ENCODE measurements at regions of chr10 and their contacts with region 1.

Region 1: DNA sequence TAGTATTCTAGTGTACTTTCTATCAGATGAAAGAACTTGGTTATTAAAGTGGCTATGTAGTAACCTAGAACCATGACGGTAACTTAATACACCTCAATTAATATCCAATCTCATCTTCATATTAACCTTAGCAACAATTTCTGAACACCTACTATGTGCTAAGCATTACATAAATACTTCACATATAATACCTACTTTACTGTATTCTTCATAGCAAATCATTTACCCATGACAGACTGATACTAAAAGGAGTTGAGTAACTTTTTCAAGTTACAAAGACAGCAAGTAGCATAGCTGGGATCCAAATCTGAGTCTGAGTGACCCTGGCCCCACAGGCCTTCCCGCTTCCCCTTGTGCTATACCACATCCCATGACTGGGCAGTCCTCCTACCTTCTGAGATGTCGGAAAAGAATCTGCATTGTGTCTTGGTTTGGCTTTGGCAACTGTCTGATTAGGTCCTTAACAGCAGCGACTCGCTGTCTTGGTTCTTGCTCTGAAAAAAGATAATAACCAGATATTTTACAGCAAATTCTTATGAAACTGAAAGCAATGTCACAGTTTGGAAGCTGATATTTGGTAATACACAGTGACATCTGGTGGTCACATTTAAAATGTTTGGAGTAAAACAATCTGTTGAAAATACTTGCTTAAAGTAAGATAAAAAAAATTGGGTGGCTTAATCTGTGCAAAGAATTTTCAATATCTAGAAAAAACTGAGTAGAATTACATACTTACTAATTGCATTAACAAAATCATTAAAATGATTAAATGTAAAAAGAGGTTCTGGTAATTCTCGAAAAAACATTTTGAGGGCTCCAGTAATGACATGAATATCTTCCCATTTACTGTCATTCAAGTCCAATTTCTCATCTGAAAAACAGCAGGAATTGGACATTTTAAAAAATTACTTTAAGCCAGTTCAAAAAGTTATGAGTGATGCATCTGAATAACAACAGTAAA is 120.1 kb downstream of the ARHGAP12 start:
- H3K4me3 Mint-ChIP-seq: peak overlapping the region; percentile 64
- H3K27ac Mint-ChIP-seq: peak overlapping the region; percentile 61
- H3K4me1 Mint-ChIP-seq: peaks cover 6% of the 10 kb centered on the region
- H3K27me3 Mint-ChIP-seq: no peaks in the 10 kb centered on the region

Region 2: DNA sequence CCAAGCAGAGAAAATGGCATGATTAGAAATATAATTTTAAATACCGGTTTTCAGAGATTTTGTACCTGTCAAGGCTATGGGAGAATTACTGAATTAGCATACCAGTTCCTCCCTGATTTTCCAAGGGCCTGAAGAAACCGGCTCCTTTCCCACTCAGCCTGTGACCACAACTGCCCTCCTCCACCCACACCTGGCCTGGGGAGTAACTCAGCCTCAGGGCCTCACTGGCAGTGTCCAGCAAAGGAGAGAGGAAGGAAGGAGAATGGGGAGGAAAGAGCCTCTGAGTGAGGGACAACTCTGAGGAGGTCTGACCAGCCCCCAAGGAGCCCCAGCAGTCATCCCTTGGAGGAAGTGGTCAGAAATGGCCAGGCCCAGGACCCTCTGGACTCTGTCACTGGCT is 1081.0 kb before region 1 on chr10:
- intact Hi-C with region 1: loop called (anchors 2 kb)
- H3K4me3 Mint-ChIP-seq: no peak overlapping the region
- H3K27ac Mint-ChIP-seq: no peak overlapping the region
- H3K4me1 Mint-ChIP-seq: peaks cover 6% of the 10 kb centered on the region
- H3K27me3 Mint-ChIP-seq: no peaks in the 10 kb centered on the region

Region 3: DNA sequence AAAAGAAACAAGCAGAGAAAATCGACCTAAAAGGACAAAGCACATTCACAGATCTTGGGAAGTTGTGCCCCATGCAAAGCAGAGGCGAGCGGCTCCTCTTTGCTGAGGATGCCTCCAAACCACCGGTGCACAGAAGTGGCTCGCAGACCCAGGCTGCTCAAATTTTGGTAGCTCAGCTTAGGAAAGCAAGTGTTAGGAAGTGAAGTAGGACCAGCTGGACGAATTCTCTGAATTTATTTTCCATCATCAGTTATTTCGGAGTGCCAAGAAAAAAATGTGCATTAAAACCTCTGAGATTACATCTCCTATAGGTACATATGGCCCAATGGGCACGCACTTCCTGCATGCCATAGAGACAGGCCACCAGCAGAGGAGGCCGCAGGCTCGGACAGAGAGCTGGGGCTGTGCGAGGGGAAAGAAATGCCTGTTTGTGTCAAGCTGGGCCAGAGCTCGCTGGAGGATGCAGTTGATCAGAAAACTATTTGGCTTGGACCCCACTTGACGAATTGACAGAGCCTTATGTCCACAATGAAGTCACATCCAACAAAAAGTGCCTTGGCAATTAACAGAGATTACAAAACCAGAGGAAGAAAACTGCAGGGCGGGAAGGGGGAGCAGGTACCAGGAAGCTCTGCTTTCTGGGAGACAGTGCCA is 1056.7 kb before region 1 on chr10:
- intact Hi-C with region 1: loop called (anchors 10 kb)
- H3K4me3 Mint-ChIP-seq: no peak overlapping the region
- H3K27ac Mint-ChIP-seq: no peak overlapping the region
- H3K4me1 Mint-ChIP-seq: no peaks in the 10 kb centered on the region
- H3K27me3 Mint-ChIP-seq: peaks cover 3% of the 10 kb centered on the region

Region 4: DNA sequence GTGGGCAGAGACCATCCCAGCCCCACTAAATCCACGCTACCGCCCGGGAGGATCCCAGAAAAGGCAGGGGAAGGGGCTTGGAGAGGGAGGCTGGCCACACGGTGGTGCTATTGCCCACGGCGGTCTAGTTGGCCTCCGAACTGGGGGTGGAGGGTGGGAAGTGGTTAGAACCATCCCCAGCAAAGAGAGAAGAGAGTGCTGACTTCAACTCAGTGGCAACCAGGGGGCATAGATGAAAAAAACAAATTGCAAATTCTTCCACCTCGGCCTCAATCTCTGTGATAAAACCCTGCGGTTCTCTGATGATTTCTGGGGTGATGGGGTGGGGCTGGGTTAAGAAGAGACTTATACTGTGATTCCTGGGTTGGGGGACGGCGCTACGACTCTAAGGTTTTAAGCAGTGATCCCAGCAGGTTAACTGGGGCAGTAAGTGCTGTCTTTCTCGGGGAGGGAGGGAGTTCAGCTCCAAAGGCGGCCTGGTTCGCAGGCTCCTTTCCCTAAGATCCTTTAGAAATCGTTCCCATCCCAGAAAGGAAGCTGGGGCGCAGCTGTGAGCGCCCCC is 1024.5 kb before region 1 on chr10:
- intact Hi-C with region 1: loop called (anchors 5 kb)
- H3K4me3 Mint-ChIP-seq: peak overlapping the region; percentile 76
- H3K27ac Mint-ChIP-seq: peak overlapping the region; percentile 30
- H3K4me1 Mint-ChIP-seq: peaks cover 22% of the 10 kb centered on the region
- H3K27me3 Mint-ChIP-seq: peaks cover 8% of the 10 kb centered on the region

Region 5: DNA sequence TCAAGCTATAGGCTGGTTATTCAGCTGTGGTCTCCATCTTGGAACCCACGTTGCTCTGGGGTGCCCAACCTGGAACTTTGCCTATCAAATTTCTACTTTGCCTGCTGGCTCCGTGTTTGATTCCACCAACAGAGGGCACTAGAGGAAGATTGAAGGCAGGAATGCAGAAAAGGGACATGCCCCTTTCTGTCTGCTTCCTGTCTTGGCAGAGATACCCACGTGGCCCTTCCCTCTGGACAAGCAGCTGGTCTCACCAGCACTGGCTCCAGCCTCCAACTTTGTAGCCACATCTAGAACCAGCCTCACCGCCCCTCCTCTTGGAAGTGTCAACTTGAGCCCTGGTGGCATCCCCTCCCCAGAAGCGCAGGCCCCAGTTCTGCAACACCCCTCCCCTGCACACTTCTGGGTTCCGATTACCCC is 724.8 kb before region 1 on chr10:
- intact Hi-C with region 1: loop called (anchors 5 kb)
- H3K4me3 Mint-ChIP-seq: no peak overlapping the region
- H3K27ac Mint-ChIP-seq: no peak overlapping the region
- H3K4me1 Mint-ChIP-seq: no peaks in the 10 kb centered on the region
- H3K27me3 Mint-ChIP-seq: no peaks in the 10 kb centered on the region

Measured in dendritic cell treated with granulocyte-macrophage colony-stimulating factor and Interleukin-4, amounts not matched to agents 40 ng/mL and 50 ng/mL, for 4 days (primary cell).